GM12878 (cell line): ENCODE measurements at regions of chr11 and their contacts with region 1.

Region 1: DNA sequence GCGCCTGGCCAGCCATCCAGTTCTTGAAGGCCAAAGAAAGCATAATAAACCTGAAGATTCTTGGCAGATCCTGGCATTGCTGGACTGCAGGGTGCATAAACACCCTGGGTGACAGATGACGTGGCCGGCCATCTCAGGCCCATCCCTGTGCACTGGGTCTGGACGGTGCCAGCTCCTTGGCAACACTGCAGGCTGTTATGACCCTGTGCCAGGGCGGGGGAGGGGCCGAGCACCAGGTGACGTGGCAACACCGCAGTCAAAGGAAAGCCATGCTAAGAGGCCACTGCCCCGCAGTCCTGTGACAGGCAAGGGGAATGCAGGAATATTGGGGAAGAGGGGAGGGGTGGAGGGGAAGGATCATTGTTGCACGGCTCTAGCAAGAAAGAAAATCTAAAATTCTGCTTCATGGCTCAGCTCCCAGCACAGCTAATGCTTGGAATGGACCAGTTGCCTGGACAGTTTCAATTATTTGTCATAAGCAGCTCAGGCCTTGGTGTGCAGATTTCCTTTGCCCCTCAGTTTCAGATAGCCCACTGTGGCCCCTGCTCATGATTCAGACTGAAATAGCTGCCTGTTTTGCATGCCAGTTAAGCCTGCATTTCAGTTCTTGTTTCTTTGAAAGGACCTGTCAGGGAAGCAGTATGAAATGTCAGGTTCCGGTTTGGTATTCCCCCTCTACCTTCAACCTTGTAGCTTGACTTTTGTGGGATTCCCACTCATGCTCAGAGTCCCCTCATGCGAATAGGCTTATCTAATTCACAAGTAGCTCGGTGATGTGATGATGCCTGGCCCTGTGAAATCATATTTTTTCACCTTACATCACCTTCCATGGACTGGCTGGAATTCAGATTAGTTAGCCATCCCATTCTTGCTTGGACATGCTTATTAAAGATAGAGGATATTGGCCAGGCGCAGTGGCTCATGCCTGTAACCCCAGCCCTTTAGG is 29.7 kb upstream of the DDX6 start:
- DNase-seq: peak; percentile 99
- ATAC-seq: peak; percentile 93
- H3K4me3 ChIP-seq: peak overlapping the region; percentile 23; the same call in 1 of the 2 replicates
- H3K27ac ChIP-seq: peak overlapping the region; percentile 94
- H3K4me1 ChIP-seq: peaks cover 50% of the 10 kb centered on the region
- H3K27me3 ChIP-seq: no peaks in the 10 kb centered on the region
- CTCF ChIP-seq: no peak
- EP300 ChIP-seq: peak; percentile 96 to 97
- POLR2A ChIP-seq: peak; percentile 13; the same call in 1 of the 2 replicates
- RAD21 ChIP-seq: 0 out of 2 replicates have a peak, but pooled peaks have one; percentile 27

Region 2: DNA sequence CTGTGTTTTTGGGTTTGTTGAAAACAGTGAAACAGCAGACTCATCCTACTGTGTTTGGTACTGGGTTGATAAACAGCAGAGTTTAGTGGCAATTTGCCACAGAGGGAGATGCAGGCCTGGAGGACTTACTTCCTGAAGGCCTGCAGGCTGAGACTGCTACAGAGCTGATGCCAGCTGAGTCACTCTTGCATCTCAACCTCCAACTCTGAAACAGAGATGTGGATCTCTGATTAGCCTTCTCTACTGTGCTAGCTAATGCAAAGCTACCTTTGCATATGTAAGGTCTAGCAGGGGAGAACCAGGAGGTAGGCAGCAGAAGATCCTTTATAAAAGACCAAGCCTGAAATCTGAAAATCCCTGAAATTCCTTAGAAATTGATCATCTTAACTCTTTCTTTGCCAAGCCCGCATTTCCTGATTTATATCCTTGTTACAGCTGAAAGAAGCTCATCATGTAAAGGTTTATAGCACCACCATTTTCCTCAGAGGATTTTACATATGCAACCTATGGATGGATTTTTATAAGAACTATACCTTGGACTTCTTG is 404.9 kb before region 1 on chr11:
- CTCF ChIA-PET with region 1: no interaction called
- POLR2A ChIA-PET with region 1: no interaction called
- RAD21 ChIA-PET with region 1: no interaction called
- SMC1A ChIA-PET with region 1: no interaction called
- in situ Hi-C with region 1: no loop called
- intact Hi-C with region 1: no loop called
- DNase-seq: no peak
- ATAC-seq: no peak
- H3K4me3 ChIP-seq: no peak overlapping the region
- H3K27ac ChIP-seq: no peak overlapping the region
- H3K4me1 ChIP-seq: peaks cover 7% of the 10 kb centered on the region
- H3K27me3 ChIP-seq: no peaks in the 10 kb centered on the region
- CTCF ChIP-seq: no peak
- EP300 ChIP-seq: no peak
- POLR2A ChIP-seq: no peak
- RAD21 ChIP-seq: no peak

Region 3: DNA sequence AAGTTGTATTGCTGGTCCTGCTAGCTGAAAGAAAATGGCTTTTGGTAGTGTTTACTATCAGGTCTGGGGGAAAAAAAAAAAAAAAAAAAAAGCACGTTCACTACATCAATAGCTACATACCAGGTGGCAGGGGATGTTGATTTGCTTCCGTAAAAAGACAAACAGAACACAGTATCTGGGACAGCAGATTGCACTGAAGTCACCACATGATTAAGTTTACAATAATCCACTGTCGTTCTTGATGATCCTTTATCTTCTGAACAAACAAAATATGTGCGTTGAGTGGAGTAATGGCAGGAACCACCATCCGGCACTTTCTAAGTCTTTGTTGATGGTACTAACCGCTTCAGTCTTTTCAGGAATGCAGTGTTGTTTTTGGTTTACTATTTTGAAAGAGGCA is 78.4 kb before region 1 on chr11:
- CTCF ChIA-PET with region 1: no interaction called
- POLR2A ChIA-PET with region 1: no interaction called
- RAD21 ChIA-PET with region 1: no interaction called
- SMC1A ChIA-PET with region 1: no interaction called
- in situ Hi-C with region 1: no loop called
- intact Hi-C with region 1: no loop called
- DNase-seq: no peak
- ATAC-seq: no peak
- H3K4me3 ChIP-seq: no peak overlapping the region
- H3K27ac ChIP-seq: no peak overlapping the region
- H3K4me1 ChIP-seq: no peaks in the 10 kb centered on the region
- H3K27me3 ChIP-seq: no peaks in the 10 kb centered on the region; a peak in 1 of 4 replicates
- CTCF ChIP-seq: no peak
- EP300 ChIP-seq: no peak
- POLR2A ChIP-seq: no peak
- RAD21 ChIP-seq: no peak

Region 4: DNA sequence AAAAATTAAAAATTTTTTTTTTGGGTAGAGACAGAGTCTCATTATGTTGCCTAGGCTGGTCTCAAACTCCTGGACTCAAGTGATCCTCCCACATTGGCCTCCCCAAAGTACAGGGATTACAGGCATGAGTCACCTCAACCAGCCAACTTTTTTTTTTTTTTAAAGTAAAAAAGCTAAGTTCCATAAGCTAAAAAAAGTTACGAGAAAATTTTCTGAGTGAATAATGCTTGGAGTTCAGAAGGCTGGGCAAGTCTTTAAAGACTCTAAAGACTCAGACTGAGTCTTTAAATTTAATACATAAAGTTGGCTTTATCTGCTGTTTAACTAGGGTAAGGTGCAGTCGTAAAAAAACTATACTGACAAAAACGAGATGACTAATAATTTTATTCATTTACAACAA is 35.3 kb before region 1 on chr11:
- CTCF ChIA-PET with region 1: interaction called, 62 read pairs
- POLR2A ChIA-PET with region 1: interaction called, 69 read pairs
- RAD21 ChIA-PET with region 1: interaction called, 67 read pairs
- SMC1A ChIA-PET with region 1: interaction called, 130 read pairs
- in situ Hi-C with region 1: no loop called
- intact Hi-C with region 1: loop called (anchors 1 kb)
- DNase-seq: no peak
- ATAC-seq: no peak
- H3K4me3 ChIP-seq: peak overlapping the region; percentile 60; the same call in 1 of the 2 replicates
- H3K27ac ChIP-seq: no peak overlapping the region
- H3K4me1 ChIP-seq: peaks cover 5% of the 10 kb centered on the region; the same call in 1 of the 2 replicates
- H3K27me3 ChIP-seq: no peaks in the 10 kb centered on the region
- CTCF ChIP-seq: no peak
- EP300 ChIP-seq: no peak
- POLR2A ChIP-seq: no peak
- RAD21 ChIP-seq: no peak

Region 5: GRCh38 chr11:118838905-118839553 is 18.3 kb after region 1 on chr11:
- CTCF ChIA-PET with region 1: interaction called, 5 read pairs
- POLR2A ChIA-PET with region 1: interaction called, 9 read pairs
- RAD21 ChIA-PET with region 1: interaction called, 47 read pairs
- SMC1A ChIA-PET with region 1: interaction called, 59 read pairs
- in situ Hi-C with region 1: no loop called
- intact Hi-C with region 1: loop called (anchors 1 kb)
- DNase-seq: peak; percentile 85
- ATAC-seq: peak; percentile 87
- H3K4me3 ChIP-seq: no peak overlapping the region; the same call in 1 of the 2 replicates
- H3K27ac ChIP-seq: peak overlapping the region; percentile 24; the same call in 1 of the 2 replicates
- H3K4me1 ChIP-seq: peaks cover 26% of the 10 kb centered on the region
- H3K27me3 ChIP-seq: no peaks in the 10 kb centered on the region
- CTCF ChIP-seq: no peak
- EP300 ChIP-seq: peak in 1 of 2 experiments; percentile 77; a peak in 2 of 4 replicates
- POLR2A ChIP-seq: no peak
- RAD21 ChIP-seq: peak; percentile 22; the same call in 1 of the 2 replicates

Region 6: DNA sequence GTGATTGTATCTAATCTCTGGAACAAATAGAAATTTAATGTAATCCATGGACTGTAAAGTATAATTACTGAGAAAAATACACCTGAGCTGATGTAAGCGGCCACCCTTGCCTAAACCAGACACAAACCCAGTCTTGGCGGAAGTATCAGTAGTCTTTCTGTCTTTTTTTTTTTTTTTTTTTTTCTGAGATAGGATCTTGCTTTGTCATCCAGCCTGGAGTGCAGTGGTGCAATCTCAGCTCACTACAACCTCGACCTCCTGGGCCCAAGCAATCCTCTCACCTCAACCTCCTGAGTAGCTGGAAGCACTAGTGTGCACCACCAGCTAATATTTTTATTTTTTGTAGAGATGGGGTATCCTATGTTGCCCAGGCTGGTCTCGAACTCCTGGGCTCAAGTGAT is 57.5 kb after region 1 on chr11:
- CTCF ChIA-PET with region 1: interaction called, 11 read pairs
- POLR2A ChIA-PET with region 1: interaction called, 16 read pairs
- RAD21 ChIA-PET with region 1: interaction called, 66 read pairs
- SMC1A ChIA-PET with region 1: interaction called, 26 read pairs
- in situ Hi-C with region 1: no loop called
- intact Hi-C with region 1: loop called (anchors 2 kb)
- DNase-seq: no peak
- ATAC-seq: no peak
- H3K4me3 ChIP-seq: no peak overlapping the region
- H3K27ac ChIP-seq: no peak overlapping the region
- H3K4me1 ChIP-seq: peaks cover 26% of the 10 kb centered on the region
- H3K27me3 ChIP-seq: peaks cover 4 to 7% of the 10 kb centered on the region in 2 experiments
- CTCF ChIP-seq: no peak
- EP300 ChIP-seq: no peak
- POLR2A ChIP-seq: no peak
- RAD21 ChIP-seq: no peak

Region 7: DNA sequence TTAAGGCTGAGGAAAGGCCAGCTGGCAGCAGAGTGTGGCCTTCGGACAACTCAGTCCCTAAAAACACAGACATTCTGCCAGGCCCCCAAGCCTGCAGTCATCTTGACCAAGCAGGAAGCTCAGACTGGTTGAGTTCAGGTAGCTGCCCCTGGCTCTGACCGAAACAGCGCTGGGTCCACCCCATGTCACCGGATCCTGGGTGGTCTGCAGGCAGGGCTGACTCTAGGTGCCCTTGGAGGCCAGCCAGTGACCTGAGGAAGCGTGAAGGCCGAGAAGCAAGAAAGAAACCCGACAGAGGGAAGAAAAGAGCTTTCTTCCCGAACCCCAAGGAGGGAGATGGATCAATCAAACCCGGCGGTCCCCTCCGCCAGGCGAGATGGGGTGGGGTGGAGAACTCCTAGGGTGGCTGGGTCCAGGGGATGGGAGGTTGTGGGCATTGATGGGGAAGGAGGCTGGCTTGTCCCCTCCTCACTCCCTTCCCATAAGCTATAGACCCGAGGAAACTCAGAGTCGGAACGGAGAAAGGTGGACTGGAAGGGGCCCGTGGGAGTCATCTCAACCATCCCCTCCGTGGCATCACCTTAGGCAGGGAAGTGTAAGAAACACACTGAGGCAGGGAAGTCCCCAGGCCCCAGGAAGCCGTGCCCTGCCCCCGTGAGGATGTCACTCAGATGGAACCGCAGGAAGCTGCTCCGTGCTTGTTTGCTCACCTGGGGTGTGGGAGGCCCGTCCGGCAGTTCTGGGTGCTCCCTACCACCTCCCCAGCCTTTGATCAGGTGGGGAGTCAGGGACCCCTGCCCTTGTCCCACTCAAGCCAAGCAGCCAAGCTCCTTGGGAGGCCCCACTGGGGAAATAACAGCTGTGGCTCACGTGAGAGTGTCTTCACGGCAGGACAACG is 74.7 kb after region 1 on chr11:
- CTCF ChIA-PET with region 1: interaction called, 8 read pairs
- POLR2A ChIA-PET with region 1: interaction called, 13 read pairs
- RAD21 ChIA-PET with region 1: interaction called, 16 read pairs
- SMC1A ChIA-PET with region 1: interaction called, 13 read pairs
- in situ Hi-C with region 1: no loop called
- intact Hi-C with region 1: no loop called
- DNase-seq: peak; percentile 47
- ATAC-seq: peak; percentile 85
- H3K4me3 ChIP-seq: no peak overlapping the region
- H3K27ac ChIP-seq: no peak overlapping the region; the same call in 1 of the 2 replicates
- H3K4me1 ChIP-seq: peaks cover 44% of the 10 kb centered on the region
- H3K27me3 ChIP-seq: no peaks in the 10 kb centered on the region
- CTCF ChIP-seq: peak in 1 of 3 experiments; percentile 34; a peak in 2 of 6 replicates
- EP300 ChIP-seq: 0 out of 4 replicates have a peak, but pooled peaks of 1 of the 2 experiments have one; percentile 18
- POLR2A ChIP-seq: peak; percentile 34; the same call in 1 of the 2 replicates
- RAD21 ChIP-seq: peak; percentile 20; the same call in 1 of the 2 replicates

Region 8: GRCh38 chr11:118961591-118961990 is 140.9 kb after region 1 on chr11:
- CTCF ChIA-PET with region 1: no interaction called
- POLR2A ChIA-PET with region 1: no interaction called
- RAD21 ChIA-PET with region 1: no interaction called
- SMC1A ChIA-PET with region 1: no interaction called
- in situ Hi-C with region 1: no loop called
- intact Hi-C with region 1: no loop called
- DNase-seq: no peak
- ATAC-seq: no peak
- H3K4me3 ChIP-seq: no peak overlapping the region
- H3K27ac ChIP-seq: no peak overlapping the region
- H3K4me1 ChIP-seq: no peaks in the 10 kb centered on the region
- H3K27me3 ChIP-seq: peaks cover 0 to 4% of the 10 kb centered on the region in 2 experiments; a peak in 1 of 4 replicates
- CTCF ChIP-seq: no peak
- EP300 ChIP-seq: no peak
- POLR2A ChIP-seq: no peak
- RAD21 ChIP-seq: no peak